GM18951 (cell line): ENCODE measurements at regions of chr3 and their contacts with region 1.

Region 1: DNA sequence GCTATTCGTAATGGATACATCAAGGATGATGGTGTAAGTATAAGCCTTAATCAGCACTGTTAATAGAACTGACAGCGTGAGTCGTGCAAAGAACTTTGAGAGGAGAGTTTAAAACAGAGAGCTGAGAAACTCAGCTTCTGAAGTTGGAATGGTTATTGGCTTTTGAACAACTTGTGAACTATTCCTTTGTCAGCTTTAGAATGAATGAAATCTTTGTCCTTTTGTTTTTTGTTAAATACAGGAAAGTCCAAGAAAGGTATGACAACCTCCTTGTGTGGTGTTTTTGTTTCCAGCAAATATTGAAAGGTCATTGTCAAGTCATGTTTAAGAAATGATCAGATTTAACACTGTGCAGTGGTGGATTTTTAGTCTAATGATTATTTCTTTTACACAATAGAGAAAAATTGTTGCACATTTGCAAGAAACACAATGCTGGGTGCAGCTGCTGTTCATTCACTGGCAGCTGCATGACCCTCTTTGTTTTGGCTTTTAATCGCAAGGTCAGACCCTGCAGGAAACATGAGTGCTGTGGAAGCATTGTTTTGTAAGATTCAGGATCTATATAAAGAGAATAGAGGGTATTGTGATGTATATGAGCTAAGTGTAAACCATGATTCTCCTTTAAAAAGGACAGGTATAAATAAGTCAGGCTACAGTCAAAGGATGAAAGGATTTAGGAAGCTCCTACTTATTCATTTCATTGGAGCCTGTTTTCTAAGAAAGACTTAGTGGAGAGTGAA is 21.7 kb upstream of the ABHD10 start:
- POLR2A ChIP-seq: no peak

Region 2: GRCh38 chr3:111723293-111724215 is 233.6 kb before region 1 on chr3:
- in situ Hi-C with region 1: loop called (anchors 10 kb)
- POLR2A ChIP-seq: no peak